ENCODE measurements at regions of chr6 and their contacts with region 1.

Region 1: DNA sequence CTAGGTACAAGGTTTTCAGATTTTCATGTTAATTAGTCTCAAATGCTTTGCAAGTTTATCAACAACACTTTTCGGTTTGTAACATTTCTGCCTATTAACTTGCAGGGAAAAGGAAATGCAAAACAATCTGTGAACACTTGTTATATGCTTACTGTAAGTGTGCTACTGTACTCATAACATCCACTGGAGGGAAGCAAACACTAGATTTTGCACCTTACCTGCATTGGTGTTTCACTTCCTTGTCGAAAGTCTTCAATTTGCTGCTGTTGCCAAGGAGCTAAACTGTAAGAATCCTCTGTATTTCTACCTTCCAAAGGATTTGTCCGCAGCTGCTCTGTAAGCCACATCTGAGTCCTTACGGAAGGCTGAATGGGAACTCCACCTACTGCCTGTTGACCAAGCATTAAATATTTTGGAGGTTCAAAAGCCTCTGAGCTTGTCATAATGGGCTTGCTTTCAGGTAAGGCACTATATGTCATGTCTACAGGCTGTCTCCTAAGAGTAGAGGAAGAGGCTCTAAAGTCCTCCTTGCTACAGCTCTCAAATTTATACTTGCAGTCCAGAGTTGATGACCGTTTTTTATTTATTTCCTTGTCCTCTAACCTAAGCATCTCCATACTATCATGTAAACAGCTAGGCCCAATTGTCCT is 17.3 kb downstream of the PLN start:
- DNase-seq: peak in 7 of 9 donors; percentile 55 to 77 (median 63)
- ATAC-seq: peak; percentile 94
- H3K4me3 ChIP-seq: no peak overlapping the region
- H3K4me3 Mint-ChIP-seq: no peak overlapping the region
- H3K27ac ChIP-seq: peak overlapping the region; percentile 34
- H3K27ac Mint-ChIP-seq: peak overlapping the region; percentile 16 to 90 (median 61)
- H3K4me1 ChIP-seq: no peaks in the 10 kb centered on the region
- H3K4me1 Mint-ChIP-seq: peaks cover 7 to 60% (median 42%) of the 10 kb centered on the region in 7 donors
- H3K27me3 ChIP-seq: no peaks in the 10 kb centered on the region
- H3K27me3 Mint-ChIP-seq: no peaks in the 10 kb centered on the region

Region 2: GRCh38 chr6:118080547-118080946 is 484.9 kb before region 1 on chr6:
- CTCF ChIA-PET with region 1: no interaction called
- POLR2A ChIA-PET with region 1: no interaction called
- intact Hi-C with region 1: no loop called
- DNase-seq: no peak
- ATAC-seq: no peak
- H3K4me3 ChIP-seq: no peak overlapping the region
- H3K4me3 Mint-ChIP-seq: no peak overlapping the region
- H3K27ac ChIP-seq: no peak overlapping the region
- H3K27ac Mint-ChIP-seq: no peak overlapping the region
- H3K4me1 ChIP-seq: no peaks in the 10 kb centered on the region
- H3K4me1 Mint-ChIP-seq: no peaks in the 10 kb centered on the region
- H3K27me3 ChIP-seq: no peaks in the 10 kb centered on the region
- H3K27me3 Mint-ChIP-seq: peaks cover 10 to 52% (median 13%) of the 10 kb centered on the region in 5 donors

Region 3: GRCh38 chr6:118283766-118284165 is 281.7 kb before region 1 on chr6:
- CTCF ChIA-PET with region 1: interaction called, 7 read pairs
- POLR2A ChIA-PET with region 1: no interaction called
- intact Hi-C with region 1: loop called in 1 of 2 experiments (anchors 5 kb)
- DNase-seq: peak in 7 of 9 donors; percentile 12 to 69 (median 59)
- ATAC-seq: peak; percentile 68
- H3K4me3 ChIP-seq: no peak overlapping the region
- H3K4me3 Mint-ChIP-seq: no peak overlapping the region
- H3K27ac ChIP-seq: no peak overlapping the region
- H3K27ac Mint-ChIP-seq: peak overlapping the region in 1 of 9 donors; percentile 40
- H3K4me1 ChIP-seq: no peaks in the 10 kb centered on the region
- H3K4me1 Mint-ChIP-seq: peaks cover 0 to 7% (median 0%) of the 10 kb centered on the region in 7 donors
- H3K27me3 ChIP-seq: no peaks in the 10 kb centered on the region
- H3K27me3 Mint-ChIP-seq: peaks cover 6 to 38% (median 14%) of the 10 kb centered on the region in 5 donors

Region 4: DNA sequence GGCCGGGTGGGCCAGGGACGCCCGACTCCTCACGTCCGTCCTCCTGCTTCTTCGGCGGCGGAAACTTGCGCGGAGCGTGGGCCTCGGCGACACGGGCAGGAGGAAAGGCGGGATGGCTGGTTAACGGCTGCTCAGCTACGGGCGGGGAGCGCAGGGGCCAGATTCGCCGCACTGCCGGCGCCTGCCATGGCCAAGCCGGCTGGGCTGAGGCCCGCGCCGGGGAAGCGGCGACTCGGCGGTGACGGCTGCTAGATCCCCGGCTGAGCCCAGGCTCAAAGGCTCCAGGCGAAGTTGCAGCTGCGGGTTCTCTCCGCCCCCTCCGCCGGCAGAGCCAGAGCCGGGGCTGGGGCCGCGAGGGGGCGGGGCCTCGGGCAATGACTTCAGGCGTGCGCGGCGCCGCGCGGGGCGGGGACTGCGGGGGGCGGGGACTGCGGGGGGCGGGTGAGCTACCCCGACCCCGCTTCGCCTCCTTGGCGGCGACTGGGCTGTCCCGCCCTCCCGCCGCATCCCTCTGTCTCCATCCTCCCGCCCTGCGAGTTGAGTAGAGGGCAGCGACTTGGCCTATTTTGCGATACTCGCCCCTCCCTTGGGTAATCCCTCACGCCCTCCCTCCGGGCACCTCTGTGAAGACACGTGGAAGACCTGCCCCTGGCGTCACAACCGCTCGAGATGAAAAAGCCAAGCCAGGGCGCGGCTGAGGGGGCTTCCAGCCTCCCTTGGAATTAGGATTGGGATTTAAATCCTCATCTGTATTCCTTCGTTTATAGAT is 86.0 kb after region 1 on chr6 and contains the start of gene CEP85L:
- CTCF ChIA-PET with region 1: no interaction called
- POLR2A ChIA-PET with region 1: no interaction called
- intact Hi-C with region 1: loop called in 1 of 2 experiments (anchors 1 kb)
- DNase-seq: peak; percentile 84 to 91 (median 89)
- ATAC-seq: peak; percentile 96
- H3K4me3 ChIP-seq: peak within 1 kb of the TSS; percentile 66
- H3K4me3 Mint-ChIP-seq: peak within 1 kb of the TSS; percentile 91 to 97 (median 94)
- H3K27ac ChIP-seq: peak within 1 kb of the TSS; percentile 87
- H3K27ac Mint-ChIP-seq: peak within 1 kb of the TSS; percentile 88 to 99 (median 94)
- H3K4me1 ChIP-seq: peaks cover 32 to 40% of the 10 kb centered on the region in 2 donors
- H3K4me1 Mint-ChIP-seq: peaks cover 33 to 73% (median 59%) of the 10 kb centered on the region in 7 donors
- H3K27me3 ChIP-seq: no peaks in the 10 kb centered on the region
- H3K27me3 Mint-ChIP-seq: no peaks in the 10 kb centered on the region
- total RNA-seq, gene CEP85L: 51.1 to 89.1 (median 78.6) TPM

Region 5: DNA sequence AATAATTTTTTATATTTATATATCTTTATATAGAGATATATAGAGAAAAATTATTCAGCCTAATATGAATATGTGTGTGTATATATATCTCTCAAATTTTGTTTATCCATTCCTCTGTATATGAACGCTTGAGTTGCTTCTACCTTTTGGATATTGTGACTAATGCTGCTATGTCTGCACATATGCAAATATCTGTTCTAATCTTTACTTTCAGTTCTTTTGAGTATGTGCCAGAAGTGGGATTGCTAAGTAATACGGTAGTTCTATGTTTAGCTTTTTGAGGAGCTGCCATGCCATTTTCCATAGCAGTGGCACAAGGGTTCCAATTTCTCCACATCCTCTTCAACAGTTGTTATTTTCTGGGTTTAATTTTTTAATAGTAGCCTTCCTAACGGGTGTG is 158.8 kb after region 1 on chr6:
- CTCF ChIA-PET with region 1: interaction called, 4 read pairs
- POLR2A ChIA-PET with region 1: no interaction called
- intact Hi-C with region 1: loop called in 1 of 2 experiments (anchors 1 kb)
- DNase-seq: peak in 1 of 9 donors; percentile 34
- ATAC-seq: no peak
- H3K4me3 ChIP-seq: peak overlapping the region; percentile 10
- H3K4me3 Mint-ChIP-seq: peak overlapping the region in 7 of 10 donors; percentile 49 to 78 (median 60)
- H3K27ac ChIP-seq: no peak overlapping the region
- H3K27ac Mint-ChIP-seq: peak overlapping the region in 8 of 9 donors; percentile 17 to 99 (median 60)
- H3K4me1 ChIP-seq: peaks cover 18 to 55% of the 10 kb centered on the region in 2 donors
- H3K4me1 Mint-ChIP-seq: peaks cover 40 to 93% (median 80%) of the 10 kb centered on the region in 7 donors
- H3K27me3 ChIP-seq: no peaks in the 10 kb centered on the region
- H3K27me3 Mint-ChIP-seq: no peaks in the 10 kb centered on the region

Region 6: DNA sequence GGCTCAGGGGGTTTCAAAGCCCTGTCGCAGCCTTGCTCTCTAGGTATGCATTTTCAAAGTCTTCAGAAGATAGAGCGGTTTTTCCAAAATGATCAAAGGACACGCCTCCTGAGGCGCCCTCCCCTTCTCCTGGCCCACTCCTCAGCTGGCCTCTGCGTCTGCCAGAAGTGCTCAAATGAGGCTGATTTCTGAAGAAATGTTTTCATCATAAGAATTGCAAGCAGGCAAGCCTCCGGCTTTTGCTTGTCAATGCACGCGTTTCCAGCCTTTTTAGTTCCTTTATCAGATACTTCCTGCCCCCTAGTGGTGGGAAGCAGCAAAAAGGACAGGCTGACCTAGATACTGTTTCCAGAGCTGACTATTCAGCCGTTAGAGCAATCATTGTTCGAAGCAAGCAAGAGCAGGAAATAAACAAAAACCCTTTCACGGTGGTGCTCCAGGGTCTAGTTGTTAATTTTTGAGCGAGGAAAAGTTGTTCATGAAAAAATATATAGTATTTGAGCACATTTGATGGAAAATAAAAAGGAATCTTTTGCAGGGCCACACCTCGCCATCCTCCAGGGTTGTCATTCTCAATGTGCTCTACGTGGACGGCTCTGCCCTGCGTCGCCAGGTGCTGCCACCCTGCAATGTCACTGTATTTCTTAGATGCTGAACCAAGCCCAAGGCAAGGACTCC is 235.1 kb after region 1 on chr6:
- CTCF ChIA-PET with region 1: interaction called, 32 read pairs
- POLR2A ChIA-PET with region 1: interaction called, 12 read pairs
- intact Hi-C with region 1: loop called (anchors 1 kb)
- DNase-seq: peak; percentile 45 to 90 (median 86)
- ATAC-seq: peak; percentile 95
- H3K4me3 ChIP-seq: peak overlapping the region; percentile 22
- H3K4me3 Mint-ChIP-seq: peak overlapping the region; percentile 14 to 88 (median 68)
- H3K27ac ChIP-seq: no peak overlapping the region
- H3K27ac Mint-ChIP-seq: peak overlapping the region; percentile 73 to 93 (median 86)
- H3K4me1 ChIP-seq: peaks cover 17 to 25% of the 10 kb centered on the region in 2 donors
- H3K4me1 Mint-ChIP-seq: peaks cover 17 to 51% (median 37%) of the 10 kb centered on the region in 7 donors
- H3K27me3 ChIP-seq: no peaks in the 10 kb centered on the region
- H3K27me3 Mint-ChIP-seq: no peaks in the 10 kb centered on the region

Region 7: GRCh38 chr6:119078376-119079282 is 513.2 kb after region 1 on chr6 and contains the start of gene FAM184A:
- CTCF ChIA-PET with region 1: interaction called, 4 read pairs
- POLR2A ChIA-PET with region 1: no interaction called
- intact Hi-C with region 1: loop called in 1 of 2 experiments (anchors 10 kb)
- DNase-seq: peak; percentile 74 to 86 (median 82)
- ATAC-seq: peak; percentile 79
- H3K4me3 ChIP-seq: peak within 1 kb of the TSS; percentile 77
- H3K4me3 Mint-ChIP-seq: peak within 1 kb of the TSS; percentile 75 to 97 (median 94)
- H3K27ac ChIP-seq: peak within 1 kb of the TSS; percentile 74
- H3K27ac Mint-ChIP-seq: peak within 1 kb of the TSS; percentile 66 to 97 (median 95)
- H3K4me1 ChIP-seq: peaks cover 5 to 25% of the 10 kb centered on the region in 2 donors
- H3K4me1 Mint-ChIP-seq: peaks cover 14 to 50% (median 39%) of the 10 kb centered on the region in 7 donors
- H3K27me3 ChIP-seq: no peaks in the 10 kb centered on the region
- H3K27me3 Mint-ChIP-seq: peaks cover 0 to 9% (median 0%) of the 10 kb centered on the region in 5 donors
- total RNA-seq, gene FAM184A: 5.3 to 9.8 (median 7.9) TPM

Measured in naive thymus-derived CD4-positive, alpha-beta T cell (primary cell).